ENCODE measurements at regions of chr1 and their contacts with region 1.

Region 1: DNA sequence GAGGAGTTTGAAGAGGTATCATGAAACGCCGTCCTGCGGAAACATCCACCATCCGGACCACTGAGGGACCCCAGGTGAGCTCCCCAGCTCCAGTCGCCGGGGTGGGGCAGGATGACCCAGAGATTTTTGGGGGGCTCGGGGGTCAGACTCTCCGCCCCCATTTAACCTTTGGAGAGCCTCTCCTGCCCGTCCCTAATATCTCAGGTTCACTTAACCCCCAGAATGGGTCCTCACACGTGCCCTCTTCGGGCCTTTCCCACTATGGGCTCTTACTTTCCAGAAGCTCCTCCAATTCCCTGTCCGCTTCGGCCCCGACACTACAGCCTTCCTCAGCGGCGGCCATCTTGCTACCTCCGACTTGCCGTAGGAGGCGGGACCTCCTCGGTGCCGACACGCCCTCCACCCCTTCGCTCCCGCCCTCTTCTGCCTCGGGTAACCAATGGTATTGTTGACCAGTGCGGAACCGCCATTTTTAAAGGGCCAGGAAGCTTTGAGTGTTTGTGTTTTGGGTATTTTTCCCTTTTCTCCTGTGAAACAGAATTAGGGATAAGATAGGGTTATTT is at the start of gene PEX19:
- DNase-seq: peak; percentile 95 to 96
- H3K4me3 ChIP-seq: peak within 1 kb of the TSS; percentile 70
- H3K4me3 Mint-ChIP-seq: peak within 1 kb of the TSS; percentile 99
- H3K27ac Mint-ChIP-seq: peak within 1 kb of the TSS; percentile 99
- H3K4me1 ChIP-seq: 0 out of 2 replicates have a peak, but pooled peaks cover 6% of the 10 kb centered on the region
- H3K4me1 Mint-ChIP-seq: peaks cover 24% of the 10 kb centered on the region
- H3K27me3 ChIP-seq: no peaks in the 10 kb centered on the region
- H3K27me3 Mint-ChIP-seq: no peaks in the 10 kb centered on the region
- CTCF ChIP-seq: no peak
- total RNA-seq, gene PEX19: 56.3 and 59.3 TPM in 2 replicates

Region 2: GRCh38 chr1:160261893-160262794 is 22.7 kb before region 1 on chr1 and contains the start of gene DCAF8:
- CTCF ChIA-PET with region 1: no interaction called
- POLR2A ChIA-PET with region 1: interaction called, 21 read pairs
- intact Hi-C with region 1: loop called (anchors 1 kb)
- DNase-seq: peak; percentile 98
- H3K4me3 ChIP-seq: peak within 1 kb of the TSS; percentile 99
- H3K4me3 Mint-ChIP-seq: peak within 1 kb of the TSS; percentile 92
- H3K27ac Mint-ChIP-seq: peak within 1 kb of the TSS; percentile 97
- H3K4me1 ChIP-seq: no peaks in the 10 kb centered on the region
- H3K4me1 Mint-ChIP-seq: peaks cover 15% of the 10 kb centered on the region
- H3K27me3 ChIP-seq: no peaks in the 10 kb centered on the region
- H3K27me3 Mint-ChIP-seq: no peaks in the 10 kb centered on the region
- CTCF ChIP-seq: no peak
- total RNA-seq, gene DCAF8: 112 and 116 TPM in 2 replicates

Region 3: DNA sequence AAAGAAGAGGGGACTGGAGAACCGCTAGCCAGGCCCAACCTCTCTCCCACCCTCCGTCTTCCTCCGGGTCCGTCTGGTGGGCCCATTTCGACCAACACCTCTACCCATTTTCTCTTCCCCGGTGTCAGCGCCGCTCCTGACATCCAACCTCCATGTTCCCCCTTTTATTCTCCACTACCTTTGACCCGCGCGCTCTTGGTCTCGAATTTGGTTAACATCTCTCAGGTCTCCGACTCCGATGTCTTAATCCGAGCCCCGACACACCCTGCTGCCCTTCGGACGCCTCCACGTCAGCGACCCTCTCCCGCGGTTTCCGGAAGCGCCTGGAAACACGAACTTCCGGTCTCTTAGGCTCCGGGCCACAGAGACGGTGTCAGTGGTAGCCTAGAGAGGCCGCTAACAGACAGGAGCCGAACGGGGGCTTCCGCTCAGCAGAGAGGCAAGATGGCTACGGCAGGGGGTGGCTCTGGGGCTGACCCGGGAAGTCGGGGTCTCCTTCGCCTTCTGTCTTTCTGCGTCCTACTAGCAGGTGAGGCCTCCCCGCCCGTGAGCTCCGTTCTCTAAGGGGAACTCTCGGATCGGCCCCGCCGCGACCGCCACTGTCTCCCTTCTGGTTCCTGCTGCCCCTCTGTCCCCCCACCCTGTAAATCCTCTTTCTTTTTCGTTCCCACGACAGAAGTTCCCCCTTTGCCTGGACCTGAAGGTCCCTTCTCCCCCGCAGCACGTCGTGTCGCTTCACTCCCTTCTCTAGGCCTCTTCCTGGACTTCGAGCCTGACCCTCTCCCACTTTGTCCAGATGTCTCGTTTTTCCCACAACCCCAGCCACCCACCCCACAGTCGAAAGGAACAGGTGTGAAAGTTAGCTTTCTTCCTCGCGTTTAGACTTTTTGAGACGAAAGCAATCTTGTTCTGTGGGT is 58.3 kb after region 1 on chr1 and contains the starts of genes COPA and NCSTN:
- CTCF ChIA-PET with region 1: no interaction called
- POLR2A ChIA-PET with region 1: no interaction called
- intact Hi-C with region 1: loop called (anchors 2 kb)
- DNase-seq: peak; percentile 93 to 96
- H3K4me3 ChIP-seq: peak within 1 kb of the TSS; percentile 85
- H3K4me3 Mint-ChIP-seq: peak within 1 kb of the TSS; percentile 88
- H3K27ac Mint-ChIP-seq: peak within 1 kb of the TSS; percentile 97
- H3K4me1 ChIP-seq: 0 out of 2 replicates have a peak, but pooled peaks cover 6% of the 10 kb centered on the region
- H3K4me1 Mint-ChIP-seq: no peaks in the 10 kb centered on the region
- H3K27me3 ChIP-seq: no peaks in the 10 kb centered on the region
- H3K27me3 Mint-ChIP-seq: no peaks in the 10 kb centered on the region
- CTCF ChIP-seq: no peak
- total RNA-seq, gene COPA: 153 and 155 TPM in 2 replicates
- total RNA-seq, gene NCSTN: 89.5 and 102 TPM in 2 replicates

Region 4: DNA sequence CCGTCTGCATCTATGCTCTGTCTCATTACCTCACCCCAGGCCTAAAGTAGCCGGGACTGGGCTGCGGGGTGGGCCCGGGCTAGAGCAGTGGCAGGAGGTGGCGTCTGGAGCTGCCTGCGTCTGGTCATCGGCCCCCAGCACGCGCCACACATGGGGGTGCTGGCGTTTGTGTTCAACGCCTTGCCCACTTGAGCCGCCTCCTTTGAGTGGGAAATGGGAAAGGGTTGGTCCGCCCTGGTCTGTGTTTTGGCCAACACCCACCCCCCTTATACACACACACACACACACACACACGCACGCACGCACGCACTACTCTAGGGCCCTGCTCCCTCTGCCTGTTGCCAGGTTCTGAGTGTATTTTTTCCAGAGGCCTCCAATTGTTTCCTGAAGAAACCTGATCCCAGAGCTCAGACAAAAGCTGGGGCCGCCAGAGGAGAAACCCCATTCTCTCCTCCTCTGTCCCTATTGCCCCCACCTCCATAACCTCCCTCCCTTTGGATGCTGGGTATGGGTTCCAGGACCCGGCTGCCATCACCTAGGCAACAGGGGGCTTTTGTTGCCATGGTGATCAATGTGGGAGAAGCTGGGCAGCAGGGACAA is 125.6 kb after region 1 on chr1:
- CTCF ChIA-PET with region 1: no interaction called
- POLR2A ChIA-PET with region 1: no interaction called
- intact Hi-C with region 1: no loop called
- DNase-seq: no peak
- H3K4me3 ChIP-seq: no peak overlapping the region
- H3K4me3 Mint-ChIP-seq: no peak overlapping the region
- H3K27ac Mint-ChIP-seq: no peak overlapping the region
- H3K4me1 ChIP-seq: 0 out of 2 replicates have a peak, but pooled peaks cover 6% of the 10 kb centered on the region
- H3K4me1 Mint-ChIP-seq: peaks cover 13% of the 10 kb centered on the region
- H3K27me3 ChIP-seq: no peaks in the 10 kb centered on the region
- H3K27me3 Mint-ChIP-seq: peaks cover 5% of the 10 kb centered on the region
- CTCF ChIP-seq: no peak

Region 5: GRCh38 chr1:160567858-160568682 is 283.2 kb after region 1 on chr1:
- CTCF ChIA-PET with region 1: no interaction called
- POLR2A ChIA-PET with region 1: no interaction called
- intact Hi-C with region 1: no loop called
- DNase-seq: no peak
- H3K4me3 ChIP-seq: no peak overlapping the region
- H3K4me3 Mint-ChIP-seq: no peak overlapping the region
- H3K27ac Mint-ChIP-seq: no peak overlapping the region
- H3K4me1 ChIP-seq: no peaks in the 10 kb centered on the region
- H3K4me1 Mint-ChIP-seq: no peaks in the 10 kb centered on the region
- H3K27me3 ChIP-seq: no peaks in the 10 kb centered on the region
- H3K27me3 Mint-ChIP-seq: peaks cover 22% of the 10 kb centered on the region
- CTCF ChIP-seq: no peak